ENCODE measurements at regions of chr1 and their contacts with region 1.

Region 1: GRCh38 chr1:10065344-10065685 is 32.6 kb downstream of the UBE4B start:
- DNase-seq: no peak
- H3K4me3 ChIP-seq: no peak overlapping the region
- H3K27ac ChIP-seq: peak overlapping the region in 2 of 4 donors; percentile 80 to 87
- H3K4me1 ChIP-seq: peaks cover 0 to 74% (median 45%) of the 10 kb centered on the region in 4 donors
- H3K27me3 ChIP-seq: no peaks in the 10 kb centered on the region
- CTCF ChIP-seq: no peak
- EP300 ChIP-seq: no peak
- POLR2A ChIP-seq: no peak

Region 2: DNA sequence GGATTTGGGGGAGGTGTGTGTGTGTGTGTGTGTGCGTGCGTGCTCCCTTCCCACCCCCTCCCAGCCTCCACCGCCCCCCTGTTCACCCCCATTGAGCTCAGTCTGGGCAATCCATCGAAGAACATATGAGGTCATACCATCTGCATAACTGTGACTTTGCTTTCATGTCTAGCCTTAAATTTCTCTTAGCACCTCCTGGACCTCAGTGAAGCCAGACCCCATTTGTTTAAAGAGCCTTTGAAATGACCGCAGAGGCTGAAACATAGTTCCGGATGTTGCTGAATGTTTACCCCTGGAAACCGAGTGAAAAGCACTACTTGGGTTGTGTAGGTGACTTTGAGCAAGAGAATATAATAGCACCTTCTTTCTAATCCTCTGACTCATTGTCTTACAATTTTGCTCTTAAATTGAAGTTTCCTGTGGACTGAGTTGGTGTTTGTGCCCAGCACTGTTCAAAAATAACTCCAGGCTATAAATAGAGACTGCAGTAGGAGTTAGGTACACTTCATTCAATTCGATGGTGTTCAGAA is 42.9 kb after region 1 on chr1:
- intact Hi-C with region 1: loop called (anchors 5 kb)
- DNase-seq: no peak
- H3K4me3 ChIP-seq: peak overlapping the region in 1 of 4 donors; percentile 12
- H3K27ac ChIP-seq: peak overlapping the region; percentile 71 to 93 (median 84)
- H3K4me1 ChIP-seq: peaks cover 0 to 41% (median 29%) of the 10 kb centered on the region in 4 donors
- H3K27me3 ChIP-seq: no peaks in the 10 kb centered on the region
- CTCF ChIP-seq: no peak
- EP300 ChIP-seq: peak in 1 of 4 donors; percentile 43
- POLR2A ChIP-seq: no peak

Measured in sigmoid colon (tissue), 7 donors.